ENCODE measurements at regions of chr3 and their contacts with region 1.

Region 1: DNA sequence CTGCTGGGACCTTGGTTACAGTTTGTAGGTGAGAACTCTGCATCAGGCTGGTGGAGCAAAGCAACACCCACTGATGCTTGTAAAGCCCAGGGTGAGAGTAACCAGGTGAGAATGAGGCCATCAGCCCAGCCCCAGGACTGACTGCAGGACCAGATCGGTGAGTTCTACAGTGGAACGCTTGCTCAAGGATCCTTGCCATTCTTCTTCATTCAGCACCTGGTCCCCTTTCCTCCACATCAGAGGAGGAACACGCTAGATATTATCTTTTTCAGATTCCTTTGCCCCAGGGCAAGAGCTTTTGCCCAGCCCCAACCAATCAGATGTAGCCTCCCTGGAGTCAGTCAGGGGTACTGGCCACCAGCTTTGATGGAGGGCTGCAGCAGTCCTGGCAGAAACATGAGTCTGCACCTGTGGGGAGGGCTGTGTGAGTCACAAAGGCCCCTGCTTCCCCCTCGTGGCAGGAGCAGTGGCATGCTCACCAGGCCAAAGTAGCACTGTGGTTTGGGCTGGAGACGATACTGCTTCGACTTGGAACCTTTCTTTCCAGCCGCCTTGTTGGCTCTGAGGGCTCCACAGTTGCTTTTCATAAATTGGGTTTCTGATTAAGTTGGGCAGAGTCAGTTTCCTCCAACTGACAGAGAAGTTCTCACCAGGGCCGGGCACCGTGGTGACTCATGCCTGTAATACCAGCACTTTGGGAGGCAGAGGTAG is 3.5 kb upstream of the SHISA5 start:
- DNase-seq: peak; percentile 46 to 78 (median 69)
- ATAC-seq: peak; percentile 89
- H3K4me3 ChIP-seq: no peak overlapping the region
- H3K4me3 Mint-ChIP-seq: peak overlapping the region in 9 of 10 donors; percentile 30 to 78 (median 47)
- H3K27ac ChIP-seq: no peak overlapping the region
- H3K27ac Mint-ChIP-seq: peak overlapping the region; percentile 6 to 86 (median 76)
- H3K4me1 ChIP-seq: peaks cover 27 to 41% of the 10 kb centered on the region in 2 donors
- H3K4me1 Mint-ChIP-seq: peaks cover 40 to 61% (median 57%) of the 10 kb centered on the region in 7 donors
- H3K27me3 ChIP-seq: no peaks in the 10 kb centered on the region
- H3K27me3 Mint-ChIP-seq: no peaks in the 10 kb centered on the region

Region 2: DNA sequence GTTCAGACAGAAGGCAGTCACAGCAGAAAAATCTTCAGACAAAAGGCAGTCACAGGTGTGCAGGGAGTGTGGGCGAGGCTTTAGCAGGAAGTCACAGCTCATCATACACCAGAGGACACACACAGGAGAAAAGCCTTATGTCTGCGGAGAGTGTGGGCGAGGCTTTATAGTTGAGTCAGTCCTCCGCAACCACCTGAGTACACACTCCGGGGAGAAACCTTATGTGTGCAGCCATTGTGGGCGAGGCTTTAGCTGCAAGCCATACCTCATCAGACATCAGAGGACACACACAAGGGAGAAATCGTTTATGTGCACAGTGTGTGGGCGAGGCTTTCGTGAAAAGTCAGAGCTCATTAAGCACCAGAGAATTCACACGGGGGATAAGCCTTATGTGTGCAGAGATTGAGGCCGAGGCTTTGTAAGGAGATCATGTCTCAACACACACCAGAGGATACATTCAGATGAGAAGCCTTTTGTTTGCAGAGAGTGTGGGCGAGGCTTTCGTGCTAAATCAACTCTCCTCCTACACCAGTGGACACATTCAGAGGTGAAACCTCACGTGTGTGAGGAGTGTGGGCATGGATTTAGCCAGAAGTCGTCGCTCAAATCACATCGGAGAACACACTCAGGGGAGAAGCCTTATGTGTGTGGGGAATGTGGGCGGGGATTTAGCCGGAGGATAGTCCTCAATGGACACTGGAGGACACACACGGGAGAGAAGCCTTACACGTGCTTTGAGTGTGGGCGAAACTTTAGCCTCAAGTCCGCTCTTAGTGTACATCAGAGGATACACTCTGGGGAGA is 238.9 kb before region 1 on chr3:
- CTCF ChIA-PET with region 1: no interaction called
- POLR2A ChIA-PET with region 1: no interaction called
- intact Hi-C with region 1: loop called (anchors 1 to 5 kb)
- DNase-seq: peak; percentile 25 to 92 (median 80)
- ATAC-seq: peak; percentile 97
- H3K4me3 ChIP-seq: peak overlapping the region; percentile 40
- H3K4me3 Mint-ChIP-seq: peak overlapping the region; percentile 74 to 93 (median 82)
- H3K27ac ChIP-seq: peak overlapping the region; percentile 71
- H3K27ac Mint-ChIP-seq: peak overlapping the region; percentile 89 to 99 (median 93)
- H3K4me1 ChIP-seq: peaks cover 14 to 26% of the 10 kb centered on the region in 2 donors
- H3K4me1 Mint-ChIP-seq: peaks cover 17 to 40% (median 39%) of the 10 kb centered on the region in 7 donors
- H3K27me3 ChIP-seq: no peaks in the 10 kb centered on the region
- H3K27me3 Mint-ChIP-seq: no peaks in the 10 kb centered on the region

Region 3: GRCh38 chr3:48400824-48401433 is 106.6 kb before region 1 on chr3:
- CTCF ChIA-PET with region 1: interaction called, 45 read pairs
- POLR2A ChIA-PET with region 1: interaction called, 3 read pairs
- intact Hi-C with region 1: loop called (anchors 1 kb)
- DNase-seq: peak; percentile 33 to 76 (median 66)
- ATAC-seq: peak; percentile 86
- H3K4me3 ChIP-seq: no peak overlapping the region
- H3K4me3 Mint-ChIP-seq: no peak overlapping the region
- H3K27ac ChIP-seq: no peak overlapping the region
- H3K27ac Mint-ChIP-seq: peak overlapping the region in 1 of 9 donors; percentile 47
- H3K4me1 ChIP-seq: no peaks in the 10 kb centered on the region
- H3K4me1 Mint-ChIP-seq: peaks cover 0 to 3% (median 0%) of the 10 kb centered on the region in 7 donors
- H3K27me3 ChIP-seq: no peaks in the 10 kb centered on the region
- H3K27me3 Mint-ChIP-seq: peaks cover 0 to 7% (median 3%) of the 10 kb centered on the region in 5 donors

Region 4: DNA sequence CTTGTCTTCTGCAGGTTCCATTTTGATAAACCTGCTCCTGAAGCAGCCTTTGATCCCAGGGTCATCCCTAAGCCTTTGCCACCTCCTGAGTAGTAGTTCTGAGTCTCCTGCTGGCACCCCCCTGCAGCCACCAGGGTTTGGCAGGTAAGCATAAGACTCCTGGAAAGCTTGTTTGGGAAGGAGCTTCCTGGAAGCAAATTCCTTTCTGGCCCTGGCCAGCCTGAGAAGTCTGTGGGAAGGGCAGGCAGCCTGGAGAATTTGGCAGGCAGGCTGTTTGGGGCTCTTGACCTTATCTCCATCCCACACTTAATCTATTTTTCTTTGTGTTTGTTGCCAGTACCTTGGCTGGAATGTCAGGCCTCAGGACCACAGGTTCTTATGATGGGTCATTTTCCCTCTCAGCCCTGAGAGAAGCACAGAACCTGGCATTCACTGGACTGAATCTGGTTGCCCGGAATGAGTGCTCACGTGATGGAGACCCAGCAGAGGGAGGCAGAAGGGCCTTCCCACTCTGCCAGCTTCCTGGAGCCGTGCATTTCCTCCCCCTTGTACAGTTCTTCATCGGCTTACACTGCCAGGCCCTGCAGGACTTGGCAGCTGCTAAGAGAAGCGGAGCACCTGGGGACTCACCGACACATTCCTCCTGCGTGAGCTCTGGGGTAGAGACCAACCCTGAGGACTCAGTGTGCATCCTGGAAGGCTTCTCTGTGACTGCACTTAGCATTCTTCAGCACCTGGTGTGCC is 47.6 kb before region 1 on chr3:
- CTCF ChIA-PET with region 1: interaction called, 14 read pairs
- POLR2A ChIA-PET with region 1: interaction called, 3 read pairs
- intact Hi-C with region 1: no loop called
- DNase-seq: no peak
- ATAC-seq: no peak
- H3K4me3 ChIP-seq: no peak overlapping the region
- H3K4me3 Mint-ChIP-seq: no peak overlapping the region
- H3K27ac ChIP-seq: no peak overlapping the region
- H3K27ac Mint-ChIP-seq: peak overlapping the region in 2 of 9 donors; percentile 8 to 18
- H3K4me1 ChIP-seq: peaks cover 0 to 2% of the 10 kb centered on the region in 2 donors
- H3K4me1 Mint-ChIP-seq: peaks cover 3 to 10% (median 6%) of the 10 kb centered on the region in 7 donors
- H3K27me3 ChIP-seq: no peaks in the 10 kb centered on the region
- H3K27me3 Mint-ChIP-seq: no peaks in the 10 kb centered on the region

Region 5: DNA sequence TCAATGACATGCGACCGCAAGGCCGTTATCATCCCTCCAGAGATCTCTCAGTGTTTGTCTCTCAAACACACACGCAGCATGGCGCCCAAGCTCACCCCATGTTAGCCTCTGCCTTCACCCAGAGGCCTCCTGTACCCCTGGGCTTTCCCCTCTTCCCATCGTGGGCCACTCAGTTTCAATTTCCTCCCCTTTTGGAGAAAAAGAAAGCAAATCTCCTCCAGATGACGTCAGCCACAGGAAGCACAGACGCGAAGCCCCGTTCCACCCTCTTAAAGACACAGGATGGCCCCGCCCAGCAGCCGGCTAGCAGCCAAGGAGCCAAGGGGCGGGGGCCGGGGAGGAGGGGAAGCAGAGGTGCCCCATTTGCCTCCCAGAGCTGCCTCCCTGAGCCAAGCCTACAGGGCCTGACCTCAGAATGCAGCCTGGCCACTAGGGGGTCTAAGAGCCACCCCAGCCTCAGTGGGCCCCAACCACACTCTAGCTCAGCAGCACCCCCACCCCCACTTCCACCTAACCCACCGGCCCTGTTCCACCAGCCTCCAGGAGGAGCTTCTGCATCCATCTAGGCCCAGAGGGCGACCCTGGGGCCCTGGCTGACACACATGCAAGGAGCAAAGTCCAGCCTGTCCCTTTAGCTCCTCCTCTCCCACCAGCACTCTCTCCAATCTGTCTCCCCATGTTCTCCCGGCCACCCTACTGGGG is 34.4 kb before region 1 on chr3:
- CTCF ChIA-PET with region 1: interaction called, 18 read pairs
- POLR2A ChIA-PET with region 1: interaction called, 28 read pairs
- intact Hi-C with region 1: loop called (anchors 1 kb)
- DNase-seq: peak; percentile 79 to 98 (median 95)
- ATAC-seq: peak; percentile 93
- H3K4me3 ChIP-seq: peak overlapping the region; percentile 92
- H3K4me3 Mint-ChIP-seq: peak overlapping the region; percentile 87 to 100 (median 94)
- H3K27ac ChIP-seq: peak overlapping the region; percentile 95
- H3K27ac Mint-ChIP-seq: peak overlapping the region; percentile 90 to 100 (median 99)
- H3K4me1 ChIP-seq: peaks cover 46 to 54% of the 10 kb centered on the region in 2 donors
- H3K4me1 Mint-ChIP-seq: peaks cover 41 to 75% (median 64%) of the 10 kb centered on the region in 7 donors
- H3K27me3 ChIP-seq: no peaks in the 10 kb centered on the region
- H3K27me3 Mint-ChIP-seq: peaks cover 0 to 2% (median 0%) of the 10 kb centered on the region in 5 donors

Region 6: DNA sequence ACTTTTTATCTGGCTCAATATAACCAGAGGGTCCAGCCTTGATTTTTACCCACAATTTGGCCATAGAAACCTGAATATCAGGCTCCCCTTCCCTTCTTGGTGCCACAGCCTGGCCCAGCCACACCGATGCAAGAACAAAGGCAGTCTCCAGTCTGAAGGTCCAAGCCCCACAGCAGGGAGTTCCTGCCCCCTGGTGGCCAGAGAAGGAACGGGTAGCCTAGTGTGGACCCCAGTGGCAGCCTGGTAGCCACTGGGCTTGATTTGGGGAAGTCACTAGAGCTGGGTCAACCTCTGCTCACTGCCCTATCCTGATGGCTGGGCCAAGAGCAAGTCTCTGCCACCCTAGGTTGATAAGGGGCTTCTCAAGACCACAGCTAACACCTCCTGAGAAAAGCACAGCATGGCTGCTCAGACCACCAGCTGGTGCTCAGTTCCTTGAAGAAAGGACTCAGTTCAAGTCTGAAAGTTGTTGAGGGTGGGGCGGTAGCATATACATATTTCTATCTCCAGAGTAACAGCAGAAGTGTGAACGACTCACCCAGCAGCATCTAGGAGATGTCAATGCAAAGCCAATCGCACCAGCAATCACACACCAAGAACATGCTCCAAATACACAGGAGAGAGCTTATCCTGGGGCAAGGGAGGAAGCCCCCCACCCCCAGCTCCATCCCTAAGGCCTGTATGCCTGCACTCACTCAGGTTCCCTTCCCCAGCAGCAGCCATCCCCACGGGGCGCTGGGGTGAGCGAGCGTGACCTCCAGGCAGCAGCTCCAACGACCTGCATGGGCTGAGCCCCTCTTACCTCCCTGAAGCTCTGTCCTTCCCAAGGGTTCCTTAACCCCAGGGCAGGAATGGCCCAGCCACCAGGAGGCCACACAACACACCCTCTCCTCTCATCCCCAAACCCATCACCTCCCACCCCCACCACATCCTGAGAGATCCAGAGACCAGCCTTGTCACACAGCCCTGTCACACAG is 41.5 kb after region 1 on chr3:
- CTCF ChIA-PET with region 1: interaction called, 25 read pairs
- POLR2A ChIA-PET with region 1: interaction called, 4 read pairs
- intact Hi-C with region 1: loop called in 1 of 2 experiments (anchors 1 kb)
- DNase-seq: peak; percentile 66 to 86 (median 78)
- ATAC-seq: peak; percentile 97
- H3K4me3 ChIP-seq: no peak overlapping the region
- H3K4me3 Mint-ChIP-seq: no peak overlapping the region
- H3K27ac ChIP-seq: no peak overlapping the region
- H3K27ac Mint-ChIP-seq: peak overlapping the region in 2 of 9 donors; percentile 9 to 48
- H3K4me1 ChIP-seq: no peaks in the 10 kb centered on the region
- H3K4me1 Mint-ChIP-seq: peaks cover 6 to 38% (median 20%) of the 10 kb centered on the region in 7 donors
- H3K27me3 ChIP-seq: no peaks in the 10 kb centered on the region
- H3K27me3 Mint-ChIP-seq: no peaks in the 10 kb centered on the region

Region 7: DNA sequence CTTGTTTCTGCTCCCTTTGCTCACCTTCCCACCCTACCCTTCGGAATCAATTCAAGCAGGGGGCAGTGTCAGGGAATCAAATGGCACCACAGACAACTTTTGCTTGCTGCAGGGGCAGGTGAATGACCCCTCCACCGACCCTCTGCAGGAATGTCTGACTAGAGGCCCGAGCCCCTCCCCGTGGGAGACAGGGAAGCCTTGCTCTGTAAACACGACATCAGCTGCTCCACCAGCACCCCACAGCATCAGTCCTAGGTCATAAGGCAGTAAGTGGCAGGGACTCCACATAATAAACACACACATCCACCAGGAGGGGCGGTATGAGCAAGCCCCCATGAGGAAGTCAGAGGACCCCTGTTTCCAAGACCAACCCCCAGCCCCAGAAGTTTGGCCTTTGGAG is 129.8 kb after region 1 on chr3:
- CTCF ChIA-PET with region 1: no interaction called
- POLR2A ChIA-PET with region 1: no interaction called
- intact Hi-C with region 1: no loop called
- DNase-seq: no peak
- ATAC-seq: no peak
- H3K4me3 ChIP-seq: no peak overlapping the region
- H3K4me3 Mint-ChIP-seq: peak overlapping the region in 7 of 10 donors; percentile 41 to 88 (median 51)
- H3K27ac ChIP-seq: no peak overlapping the region
- H3K27ac Mint-ChIP-seq: no peak overlapping the region
- H3K4me1 ChIP-seq: peaks cover 0 to 11% of the 10 kb centered on the region in 2 donors
- H3K4me1 Mint-ChIP-seq: peaks cover 4 to 31% (median 22%) of the 10 kb centered on the region in 7 donors
- H3K27me3 ChIP-seq: no peaks in the 10 kb centered on the region
- H3K27me3 Mint-ChIP-seq: no peaks in the 10 kb centered on the region

Measured in naive thymus-derived CD4-positive, alpha-beta T cell (primary cell).